T-cell (primary cell): ENCODE measurements at regions of chr14 and their contacts with region 1.

Region 1: DNA sequence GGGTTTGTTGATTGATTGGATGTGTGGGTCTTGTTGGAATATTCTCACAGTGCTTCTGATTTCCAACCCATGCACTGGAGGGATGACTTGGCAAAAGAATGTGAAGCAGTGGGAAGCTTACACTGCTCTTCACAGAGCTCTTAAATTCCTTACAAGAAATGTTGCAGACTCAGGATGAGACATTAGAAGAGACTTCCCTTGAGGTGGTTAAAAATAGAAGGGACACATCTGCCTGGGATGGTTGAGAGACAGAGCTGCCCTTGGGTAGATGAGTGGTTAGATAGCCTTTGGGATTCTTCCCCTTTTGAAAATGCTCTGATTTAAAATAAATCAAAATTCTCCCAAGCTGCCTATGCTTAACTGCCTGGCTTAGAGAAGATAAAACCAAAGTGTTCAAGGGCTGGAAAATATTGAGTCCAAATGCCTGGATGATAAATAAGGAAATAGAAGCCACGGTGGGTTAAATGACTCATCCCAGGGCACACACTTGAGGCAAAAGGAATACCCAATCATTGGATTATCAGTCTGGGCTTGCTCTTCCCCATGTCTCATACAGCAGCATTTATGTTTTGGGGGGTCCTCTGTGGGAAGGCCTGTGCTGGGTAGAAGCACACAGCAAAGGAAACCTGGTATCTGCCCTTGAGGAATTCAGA is 264.3 kb downstream of the AKAP6 start:
- DNase-seq: no peak
- ATAC-seq: no peak
- H3K4me3 ChIP-seq: no peak overlapping the region
- H3K4me3 Mint-ChIP-seq: no peak overlapping the region
- H3K27ac ChIP-seq: no peak overlapping the region
- H3K27ac Mint-ChIP-seq: no peak overlapping the region
- H3K4me1 ChIP-seq: no peaks in the 10 kb centered on the region
- H3K4me1 Mint-ChIP-seq: no peaks in the 10 kb centered on the region
- H3K27me3 ChIP-seq: no peaks in the 10 kb centered on the region
- H3K27me3 Mint-ChIP-seq: peaks cover 0 to 7% of the 10 kb centered on the region in 2 donors

Region 2: GRCh38 chr14:32560209-32560857 is 33.1 kb before region 1 on chr14:
- CTCF ChIA-PET with region 1: interaction called in 1 of 2 experiments, 3 read pairs
- POLR2A ChIA-PET with region 1: interaction called in 1 of 2 experiments, 13 read pairs
- DNase-seq: peak in 7 of 35 experiments; percentile 1 to 47 (median 2)
- ATAC-seq: peak in 1 of 4 experiments; percentile 40
- H3K4me3 ChIP-seq: no peak overlapping the region
- H3K4me3 Mint-ChIP-seq: no peak overlapping the region
- H3K27ac ChIP-seq: no peak overlapping the region
- H3K27ac Mint-ChIP-seq: no peak overlapping the region
- H3K4me1 ChIP-seq: peaks cover 0 to 7% of the 10 kb centered on the region in 2 experiments
- H3K4me1 Mint-ChIP-seq: peaks cover 12 to 14% (median 13%) of the 10 kb centered on the region in 3 donors
- H3K27me3 ChIP-seq: no peaks in the 10 kb centered on the region
- H3K27me3 Mint-ChIP-seq: no peaks in the 10 kb centered on the region